ENCODE measurements at regions of chrX and their contacts with region 1.

Region 1: DNA sequence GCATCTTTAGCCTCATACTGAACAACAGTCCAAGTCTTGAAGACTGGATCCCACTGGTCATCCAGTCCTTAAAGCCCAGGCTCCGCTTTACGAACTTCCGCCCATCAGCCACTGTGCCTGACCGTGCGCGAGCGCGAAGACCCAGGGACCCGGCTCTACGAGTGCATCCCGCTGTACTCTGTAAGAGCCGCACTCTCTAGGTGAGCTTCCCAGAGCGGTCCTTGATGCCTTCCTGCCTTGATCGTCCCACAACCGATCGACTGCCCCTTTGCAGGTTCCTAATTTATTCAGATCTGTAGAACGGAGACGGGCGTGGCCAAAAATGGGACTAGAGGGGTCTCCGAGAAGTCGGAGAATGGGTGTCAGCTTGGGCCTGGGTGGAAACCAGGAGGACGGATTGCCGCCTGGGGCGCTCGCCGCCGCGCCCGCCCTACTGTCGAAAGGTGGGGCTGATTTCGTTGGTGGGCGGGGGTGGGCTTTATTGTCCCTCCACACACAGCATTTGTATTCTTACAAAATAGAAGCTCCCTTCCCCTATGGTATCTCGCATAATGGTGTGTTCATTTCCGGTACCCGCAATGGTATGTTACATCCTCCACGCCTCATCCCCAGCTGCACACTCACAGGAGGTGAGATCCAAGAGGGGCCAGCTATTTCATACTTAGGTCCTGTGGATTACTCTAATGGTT is 42.3 kb upstream of the FAM156A start:
- DNase-seq: no peak
- ATAC-seq: no peak
- H3K4me3 ChIP-seq: no peak overlapping the region
- H3K27ac ChIP-seq: no peak overlapping the region
- H3K4me1 ChIP-seq: no peaks in the 10 kb centered on the region
- H3K27me3 ChIP-seq: no peaks in the 10 kb centered on the region
- CTCF ChIP-seq: no peak
- EP300 ChIP-seq: no peak
- POLR2A ChIP-seq: no peak
- RAD21 ChIP-seq: no peak

Region 2: GRCh38 chrX:52988985-52989935 is 11.3 kb before region 1 on chrX:
- CTCF ChIA-PET with region 1: interaction called, 14 read pairs
- POLR2A ChIA-PET with region 1: interaction called, 3 read pairs
- RAD21 ChIA-PET with region 1: no interaction called
- SMC1A ChIA-PET with region 1: interaction called, 6 read pairs
- in situ Hi-C with region 1: no loop called
- intact Hi-C with region 1: no loop called
- DNase-seq: no peak
- ATAC-seq: no peak
- H3K4me3 ChIP-seq: no peak overlapping the region
- H3K27ac ChIP-seq: no peak overlapping the region
- H3K4me1 ChIP-seq: no peaks in the 10 kb centered on the region
- H3K27me3 ChIP-seq: no peaks in the 10 kb centered on the region
- CTCF ChIP-seq: no peak
- EP300 ChIP-seq: no peak
- POLR2A ChIP-seq: no peak
- RAD21 ChIP-seq: no peak

Region 3: GRCh38 chrX:53864591-53864990 is 864.0 kb after region 1 on chrX:
- CTCF ChIA-PET with region 1: no interaction called
- POLR2A ChIA-PET with region 1: no interaction called
- RAD21 ChIA-PET with region 1: no interaction called
- SMC1A ChIA-PET with region 1: no interaction called
- in situ Hi-C with region 1: no loop called
- intact Hi-C with region 1: no loop called
- DNase-seq: no peak
- ATAC-seq: no peak
- H3K4me3 ChIP-seq: no peak overlapping the region
- H3K27ac ChIP-seq: no peak overlapping the region
- H3K4me1 ChIP-seq: no peaks in the 10 kb centered on the region
- H3K27me3 ChIP-seq: no peaks in the 10 kb centered on the region
- CTCF ChIP-seq: no peak
- EP300 ChIP-seq: no peak
- POLR2A ChIP-seq: no peak
- RAD21 ChIP-seq: no peak

Measured in GM12878 (cell line).